PC-3 (cell line): ENCODE measurements at regions of chr9 and their contacts with region 1.

Region 1: GRCh38 chr9:4923580-4924544 is 61.2 kb upstream of the JAK2 start:
- DNase-seq: peak; percentile 53
- ATAC-seq: peak; percentile 45; the same call in 1 of the 2 replicates
- H3K4me3 ChIP-seq: no peak overlapping the region
- H3K27ac ChIP-seq: peak overlapping the region; percentile 99
- H3K4me1 ChIP-seq: peaks cover 34% of the 10 kb centered on the region
- H3K27me3 ChIP-seq: no peaks in the 10 kb centered on the region
- CTCF ChIP-seq: peak; percentile 74

Region 2: DNA sequence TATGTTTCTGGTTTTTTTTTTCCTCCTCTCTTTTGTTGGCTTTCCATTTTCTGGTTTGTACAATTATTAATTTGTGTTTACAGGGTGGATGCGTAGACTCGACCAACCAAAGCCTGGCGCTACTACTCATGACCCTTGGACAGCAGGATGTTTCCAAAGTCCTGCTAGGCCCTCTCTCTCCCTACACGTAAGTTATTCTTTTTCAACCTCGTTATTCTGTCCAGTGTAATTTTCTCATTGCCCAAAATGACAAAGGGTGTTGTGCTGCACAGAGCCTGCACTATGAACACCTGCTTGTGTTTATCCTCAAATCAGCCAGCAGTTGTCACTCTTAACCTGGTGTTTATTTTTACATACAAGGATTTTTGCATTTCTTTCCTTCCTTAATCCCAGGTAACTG is 74.5 kb before region 1 on chr9:
- CTCF ChIA-PET with region 1: no interaction called
- POLR2A ChIA-PET with region 1: no interaction called
- intact Hi-C with region 1: loop called (anchors 2 kb)
- DNase-seq: peak; percentile 13
- ATAC-seq: 0 out of 2 replicates have a peak, but pooled peaks have one; percentile 38
- H3K4me3 ChIP-seq: no peak overlapping the region
- H3K27ac ChIP-seq: no peak overlapping the region
- H3K4me1 ChIP-seq: no peaks in the 10 kb centered on the region
- H3K27me3 ChIP-seq: no peaks in the 10 kb centered on the region
- CTCF ChIP-seq: peak; percentile 49

Region 3: GRCh38 chr9:4967523-4967922 is 43.7 kb after region 1 on chr9:
- CTCF ChIA-PET with region 1: no interaction called
- POLR2A ChIA-PET with region 1: no interaction called
- intact Hi-C with region 1: no loop called
- DNase-seq: no peak
- ATAC-seq: no peak
- H3K4me3 ChIP-seq: no peak overlapping the region
- H3K27ac ChIP-seq: no peak overlapping the region
- H3K4me1 ChIP-seq: no peaks in the 10 kb centered on the region
- H3K27me3 ChIP-seq: no peaks in the 10 kb centered on the region
- CTCF ChIP-seq: no peak